K562 (cell line): ENCODE measurements at regions of chrX and their contacts with region 1.

Region 1: GRCh38 chrX:23742697-23743622 is at the start of gene ACOT9:
- DNase-seq: peak; percentile 93 to 95 (median 94)
- ATAC-seq: peak; percentile 99
- H3K4me3 ChIP-seq: peak within 1 kb of the TSS; percentile 77
- H3K27ac ChIP-seq: peak within 1 kb of the TSS; percentile 70
- H3K4me1 ChIP-seq: peaks cover 9 to 15% of the 10 kb centered on the region in 2 experiments; a peak in 4 of 5 replicates
- H3K27me3 ChIP-seq: no peaks in the 10 kb centered on the region
- CTCF ChIP-seq: no peak
- EP300 ChIP-seq: no peak
- POLR2A ChIP-seq: peak; percentile 76
- RAD21 ChIP-seq: no peak
- polyA plus RNA-seq, gene ACOT9: 50.0 to 80.9 TPM

Region 2: DNA sequence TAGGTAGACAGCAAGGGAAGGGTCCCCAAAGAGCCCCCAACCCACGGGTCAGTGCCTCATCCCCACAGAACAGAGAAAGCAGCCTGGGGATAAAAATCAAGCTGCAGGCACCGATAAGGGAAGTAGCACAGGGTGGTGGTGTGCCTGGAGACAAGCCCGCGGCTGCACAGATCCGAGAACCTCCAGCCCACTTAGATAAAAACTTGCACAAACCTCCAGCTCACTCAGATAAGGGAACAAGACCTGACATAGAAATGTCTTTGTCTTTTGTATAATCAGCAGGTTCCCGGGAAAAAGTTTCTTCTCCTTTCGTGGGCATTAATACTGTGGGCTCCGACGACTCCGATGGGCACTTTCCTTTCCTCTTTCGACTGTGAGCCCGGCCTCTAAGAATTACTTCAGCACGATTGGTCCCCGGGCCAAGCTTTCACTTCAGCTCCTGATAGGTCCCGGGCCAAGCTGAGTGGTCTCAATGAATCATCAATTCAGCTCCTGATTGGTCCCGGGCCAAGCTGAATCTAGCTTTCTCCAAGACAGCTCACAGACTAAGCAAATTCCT is 43.2 kb before region 1 on chrX:
- CTCF ChIA-PET with region 1: no interaction called
- POLR2A ChIA-PET with region 1: interaction called, 9 read pairs
- in situ Hi-C with region 1: no loop called
- intact Hi-C with region 1: loop called (anchors 2 kb)
- DNase-seq: peak; percentile 56 to 77 (median 69)
- ATAC-seq: peak; percentile 94
- H3K4me3 ChIP-seq: peak overlapping the region; percentile 9; the same call in 1 of the 2 replicates
- H3K27ac ChIP-seq: peak overlapping the region; percentile 4; the same call in 1 of the 3 replicates
- H3K4me1 ChIP-seq: peaks cover 4 to 8% of the 10 kb centered on the region in 2 experiments; a peak in 3 of 5 replicates
- H3K27me3 ChIP-seq: no peaks in the 10 kb centered on the region
- CTCF ChIP-seq: no peak
- EP300 ChIP-seq: peak; percentile 59
- POLR2A ChIP-seq: no peak
- RAD21 ChIP-seq: no peak